ENCODE measurements at regions of chrX and their contacts with region 1.

Region 1: GRCh38 chrX:103464774-103465117 is 54.5 kb downstream of the RAB40A start:
- DNase-seq: peak; percentile 83
- H3K4me3 Mint-ChIP-seq: peak overlapping the region; percentile 83
- H3K27ac Mint-ChIP-seq: peak overlapping the region; percentile 58
- H3K4me1 Mint-ChIP-seq: peaks cover 24% of the 10 kb centered on the region
- H3K27me3 Mint-ChIP-seq: no peaks in the 10 kb centered on the region

Region 2: DNA sequence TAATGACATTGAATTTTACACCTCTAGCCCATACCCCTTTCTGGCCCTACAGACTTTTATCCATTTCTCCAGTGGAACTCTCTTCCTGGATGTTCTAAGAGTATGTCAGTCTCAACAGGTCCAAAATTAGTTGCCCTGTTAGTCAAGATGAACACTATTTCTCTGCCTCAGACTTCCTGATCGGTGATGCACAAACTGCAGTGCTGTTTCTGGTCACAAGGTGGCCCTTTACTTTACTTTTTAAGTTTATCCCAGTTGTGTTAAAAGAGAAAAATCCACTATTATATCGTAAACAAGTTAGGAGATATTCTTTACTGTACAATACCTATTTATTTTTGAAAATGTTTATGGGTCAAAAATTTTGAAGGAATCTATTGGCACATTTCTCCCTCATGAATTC is 121.6 kb before region 1 on chrX:
- CTCF ChIA-PET with region 1: interaction called, 21 read pairs
- POLR2A ChIA-PET with region 1: no interaction called
- intact Hi-C with region 1: loop called (anchors 1 kb)
- DNase-seq: peak; percentile 48
- H3K4me3 Mint-ChIP-seq: no peak overlapping the region
- H3K27ac Mint-ChIP-seq: no peak overlapping the region
- H3K4me1 Mint-ChIP-seq: peaks cover 3% of the 10 kb centered on the region
- H3K27me3 Mint-ChIP-seq: peaks cover 2% of the 10 kb centered on the region

Region 3: DNA sequence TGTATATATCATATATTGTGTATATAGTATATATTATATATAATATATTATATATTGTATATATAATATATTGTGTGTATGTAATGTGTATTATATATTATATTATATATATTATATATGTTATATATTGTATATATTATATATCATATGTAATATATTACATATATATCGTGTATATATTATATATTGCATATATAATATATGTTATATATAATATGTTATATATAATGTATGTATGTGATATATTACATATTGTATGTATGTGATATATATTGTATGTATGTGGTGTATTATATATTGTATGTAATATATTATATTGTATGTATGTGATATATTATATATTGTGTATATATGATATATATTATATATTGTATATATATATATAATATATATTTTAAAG is 24.0 kb after region 1 on chrX:
- CTCF ChIA-PET with region 1: interaction called, 10 read pairs
- POLR2A ChIA-PET with region 1: no interaction called
- intact Hi-C with region 1: no loop called
- DNase-seq: no peak
- H3K4me3 Mint-ChIP-seq: no peak overlapping the region
- H3K27ac Mint-ChIP-seq: no peak overlapping the region
- H3K4me1 Mint-ChIP-seq: no peaks in the 10 kb centered on the region
- H3K27me3 Mint-ChIP-seq: no peaks in the 10 kb centered on the region